B cell (primary cell): ENCODE measurements at regions of chrX and their contacts with region 1.

Region 1: DNA sequence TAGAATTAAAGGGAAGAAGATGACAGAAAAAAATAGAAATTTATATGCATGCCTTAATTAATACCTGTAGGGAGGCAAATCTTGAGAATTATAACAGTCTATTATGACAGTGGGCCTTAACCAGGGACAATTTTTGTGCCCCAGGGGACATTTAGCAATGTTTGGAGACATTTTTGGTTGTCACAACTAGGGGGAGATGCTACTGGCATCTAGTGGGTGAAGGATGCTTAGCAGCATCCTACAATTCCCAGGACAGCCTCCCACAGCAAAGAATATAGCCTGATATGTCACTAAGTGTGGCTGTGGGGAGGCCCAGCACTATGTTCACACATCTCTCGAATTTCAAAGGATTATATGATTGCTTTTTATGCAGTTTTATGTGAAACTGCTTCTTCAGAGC is 10.5 kb downstream of the GPR82 start:
- DNase-seq: peak; percentile 46
- ATAC-seq: no peak
- H3K4me3 ChIP-seq: no peak overlapping the region
- H3K4me3 Mint-ChIP-seq: peak overlapping the region; percentile 82
- H3K27ac ChIP-seq: peak overlapping the region in 1 of 2 donors; percentile 58
- H3K27ac Mint-ChIP-seq: peak overlapping the region; percentile 86
- H3K4me1 ChIP-seq: peaks cover 23 to 24% of the 10 kb centered on the region in 2 donors
- H3K4me1 Mint-ChIP-seq: peaks cover 41% of the 10 kb centered on the region
- H3K27me3 ChIP-seq: no peaks in the 10 kb centered on the region
- H3K27me3 Mint-ChIP-seq: no peaks in the 10 kb centered on the region
- CTCF ChIP-seq: peak; percentile 31

Region 2: GRCh38 chrX:40700640-40701342 is 1033.7 kb before region 1 on chrX:
- CTCF ChIA-PET with region 1: no interaction called
- POLR2A ChIA-PET with region 1: no interaction called
- intact Hi-C with region 1: no loop called
- DNase-seq: no peak
- ATAC-seq: no peak
- H3K4me3 ChIP-seq: no peak overlapping the region
- H3K4me3 Mint-ChIP-seq: no peak overlapping the region
- H3K27ac ChIP-seq: no peak overlapping the region
- H3K27ac Mint-ChIP-seq: no peak overlapping the region
- H3K4me1 ChIP-seq: no peaks in the 10 kb centered on the region
- H3K4me1 Mint-ChIP-seq: no peaks in the 10 kb centered on the region
- H3K27me3 ChIP-seq: no peaks in the 10 kb centered on the region
- H3K27me3 Mint-ChIP-seq: no peaks in the 10 kb centered on the region
- CTCF ChIP-seq: no peak

Region 3: GRCh38 chrX:41441934-41442823 is 292.4 kb before region 1 on chrX:
- CTCF ChIA-PET with region 1: no interaction called
- POLR2A ChIA-PET with region 1: no interaction called
- intact Hi-C with region 1: loop called (anchors 10 kb)
- DNase-seq: peak; percentile 89
- ATAC-seq: peak; percentile 92
- H3K4me3 ChIP-seq: peak overlapping the region in 4 of 5 experiments; percentile 23 to 58 (median 52)
- H3K4me3 Mint-ChIP-seq: peak overlapping the region; percentile 79
- H3K27ac ChIP-seq: peak overlapping the region; percentile 6 to 49
- H3K27ac Mint-ChIP-seq: peak overlapping the region; percentile 50
- H3K4me1 ChIP-seq: peaks cover 17 to 28% of the 10 kb centered on the region in 2 donors
- H3K4me1 Mint-ChIP-seq: peaks cover 23% of the 10 kb centered on the region
- H3K27me3 ChIP-seq: no peaks in the 10 kb centered on the region
- H3K27me3 Mint-ChIP-seq: no peaks in the 10 kb centered on the region
- CTCF ChIP-seq: peak; percentile 61

Region 4: DNA sequence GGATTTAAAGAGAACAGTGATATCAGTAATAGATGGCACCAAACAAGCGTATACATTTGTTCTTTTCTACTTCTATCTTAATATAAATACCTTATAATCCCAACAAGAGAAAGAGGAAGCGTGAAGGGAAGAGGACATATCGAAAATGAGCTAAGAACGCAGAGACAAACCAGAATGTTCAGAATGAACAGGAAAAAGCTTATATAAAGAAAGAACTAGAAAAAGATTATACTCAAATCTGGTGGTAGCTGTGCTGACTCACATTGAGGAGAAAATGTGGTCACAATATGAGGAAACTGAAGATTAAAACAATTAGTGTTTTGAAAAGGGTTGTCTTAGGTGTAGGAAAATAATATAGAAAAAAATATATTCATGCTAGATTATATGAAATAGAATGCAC is 47.7 kb before region 1 on chrX:
- CTCF ChIA-PET with region 1: no interaction called
- POLR2A ChIA-PET with region 1: no interaction called
- intact Hi-C with region 1: loop called (anchors 2 kb)
- DNase-seq: no peak
- ATAC-seq: no peak
- H3K4me3 ChIP-seq: no peak overlapping the region
- H3K4me3 Mint-ChIP-seq: no peak overlapping the region
- H3K27ac ChIP-seq: no peak overlapping the region
- H3K27ac Mint-ChIP-seq: no peak overlapping the region
- H3K4me1 ChIP-seq: peaks cover 24 to 26% of the 10 kb centered on the region in 2 donors
- H3K4me1 Mint-ChIP-seq: peaks cover 36% of the 10 kb centered on the region
- H3K27me3 ChIP-seq: no peaks in the 10 kb centered on the region
- H3K27me3 Mint-ChIP-seq: no peaks in the 10 kb centered on the region
- CTCF ChIP-seq: no peak

Region 5: GRCh38 chrX:41720125-41720779 is 14.3 kb before region 1 on chrX:
- CTCF ChIA-PET with region 1: interaction called, 3 read pairs
- POLR2A ChIA-PET with region 1: no interaction called
- intact Hi-C with region 1: loop called (anchors 1 kb)
- DNase-seq: peak; percentile 44
- ATAC-seq: peak; percentile 85
- H3K4me3 ChIP-seq: no peak overlapping the region
- H3K4me3 Mint-ChIP-seq: peak overlapping the region; percentile 4
- H3K27ac ChIP-seq: no peak overlapping the region
- H3K27ac Mint-ChIP-seq: peak overlapping the region; percentile 56
- H3K4me1 ChIP-seq: peaks cover 58 to 80% of the 10 kb centered on the region in 2 donors
- H3K4me1 Mint-ChIP-seq: peaks cover 72% of the 10 kb centered on the region
- H3K27me3 ChIP-seq: no peaks in the 10 kb centered on the region
- H3K27me3 Mint-ChIP-seq: no peaks in the 10 kb centered on the region
- CTCF ChIP-seq: no peak